Activated CD4-positive, alpha-beta T cell treated with anti-CD3 and anti-CD28 coated beads, Interleukin-2, amount 10 ng/mL, durations not matched to agents 24 days and 14 days (primary cell): ENCODE measurements at regions of chr7 and their contacts with region 1.

Region 1: GRCh38 chr7:50266635-50267386 is 37.7 kb upstream of the IKZF1 start:
- DNase-seq: peak; percentile 95
- H3K4me3 Mint-ChIP-seq: peak overlapping the region; percentile 86
- H3K27ac Mint-ChIP-seq: peak overlapping the region; percentile 95
- H3K4me1 Mint-ChIP-seq: peaks cover 84% of the 10 kb centered on the region
- H3K27me3 Mint-ChIP-seq: no peaks in the 10 kb centered on the region

Region 2: GRCh38 chr7:50227726-50228125 is 39.1 kb before region 1 on chr7:
- intact Hi-C with region 1: loop called (anchors 1 kb)
- DNase-seq: peak; percentile 63
- H3K4me3 Mint-ChIP-seq: peak overlapping the region; percentile 71
- H3K27ac Mint-ChIP-seq: peak overlapping the region; percentile 89
- H3K4me1 Mint-ChIP-seq: peaks cover 34% of the 10 kb centered on the region
- H3K27me3 Mint-ChIP-seq: no peaks in the 10 kb centered on the region

Region 3: DNA sequence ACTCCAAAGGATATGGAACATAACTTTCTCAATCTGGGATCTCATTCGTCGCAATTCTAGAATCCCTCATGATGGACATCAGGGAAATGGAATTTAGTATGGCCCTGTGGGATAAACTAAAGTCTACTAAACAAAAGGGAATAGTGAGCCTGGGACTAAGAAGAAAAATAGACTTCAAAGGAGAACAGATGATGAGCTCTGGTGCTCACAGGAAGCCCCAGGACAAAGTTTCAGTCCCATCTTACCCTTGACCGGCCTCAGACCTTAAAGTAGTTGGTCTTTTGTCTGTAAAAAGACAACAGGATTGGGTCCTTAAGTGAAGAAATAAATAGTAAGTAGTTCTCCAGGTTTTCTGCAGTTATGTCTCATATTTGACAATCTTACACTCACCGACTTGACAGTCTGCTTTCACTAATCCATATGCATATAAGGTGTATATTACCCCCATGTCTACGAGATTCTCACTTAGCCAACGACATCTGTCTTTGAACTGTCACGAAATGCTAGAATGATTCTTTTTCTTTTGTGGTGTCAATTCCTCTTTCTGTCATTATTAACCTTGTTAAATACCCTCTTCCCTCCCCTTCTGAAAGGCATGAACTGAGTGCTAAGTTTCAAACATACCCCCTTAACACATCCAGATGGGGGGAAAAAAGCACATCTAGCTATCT is 26.8 kb after region 1 on chr7:
- intact Hi-C with region 1: loop called (anchors 1 kb)
- DNase-seq: peak; percentile 45
- H3K4me3 Mint-ChIP-seq: no peak overlapping the region
- H3K27ac Mint-ChIP-seq: no peak overlapping the region
- H3K4me1 Mint-ChIP-seq: peaks cover 25% of the 10 kb centered on the region
- H3K27me3 Mint-ChIP-seq: peaks cover 4% of the 10 kb centered on the region

Region 4: GRCh38 chr7:50317221-50317678 is 50.4 kb after region 1 on chr7:
- intact Hi-C with region 1: loop called (anchors 2 kb)
- DNase-seq: peak; percentile 87
- H3K4me3 Mint-ChIP-seq: peak overlapping the region; percentile 79
- H3K27ac Mint-ChIP-seq: peak overlapping the region; percentile 88
- H3K4me1 Mint-ChIP-seq: peaks cover 87% of the 10 kb centered on the region
- H3K27me3 Mint-ChIP-seq: no peaks in the 10 kb centered on the region

Region 5: DNA sequence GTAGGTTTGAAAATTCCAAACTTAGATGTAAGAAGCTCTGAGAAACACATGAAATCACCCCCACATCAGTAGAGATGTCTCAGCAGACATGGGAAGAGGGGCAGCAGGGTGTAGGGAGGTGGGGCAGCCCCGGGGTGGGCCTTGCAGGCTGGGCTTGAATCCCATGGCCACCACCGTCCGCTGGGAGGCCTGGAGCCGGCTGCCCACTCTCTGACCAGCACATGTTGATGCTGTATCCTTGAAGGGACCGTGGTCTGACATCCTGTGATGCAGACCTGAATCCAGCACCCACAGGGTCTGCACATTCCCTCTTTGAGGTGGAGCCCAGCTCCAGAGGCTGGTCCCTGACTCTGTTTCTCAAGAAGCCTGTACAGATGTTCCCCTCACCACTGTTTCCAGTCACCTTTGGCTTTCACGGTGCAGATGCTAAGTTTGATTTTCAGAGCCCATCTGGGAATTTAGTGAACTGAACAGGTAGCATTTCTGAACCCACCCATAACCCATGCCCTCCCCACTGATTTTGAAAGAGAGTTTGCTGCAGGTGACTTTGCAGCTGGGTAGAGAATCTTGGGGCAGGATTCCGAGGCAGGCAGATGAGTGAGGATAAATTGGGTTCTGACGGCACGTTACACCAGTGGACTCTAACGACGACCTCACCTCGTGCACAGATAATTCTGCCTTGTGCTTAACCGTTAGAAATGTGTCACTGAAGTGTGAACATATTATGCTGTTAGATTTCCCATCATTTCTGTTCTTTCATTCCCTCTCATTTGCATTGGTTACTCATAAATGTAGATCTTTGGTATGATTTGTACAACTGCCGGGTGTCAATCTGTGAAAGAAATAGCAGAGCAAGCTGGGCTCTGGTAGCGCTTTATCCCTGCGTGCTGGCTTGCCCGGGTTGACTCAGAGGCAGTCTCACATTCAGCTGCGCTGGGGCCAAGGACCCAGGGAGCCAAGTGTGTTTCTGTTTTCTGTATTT is 83.4 kb after region 1 on chr7:
- intact Hi-C with region 1: loop called (anchors 1 kb)
- DNase-seq: peak; percentile 92
- H3K4me3 Mint-ChIP-seq: peak overlapping the region; percentile 76
- H3K27ac Mint-ChIP-seq: peak overlapping the region; percentile 95
- H3K4me1 Mint-ChIP-seq: peaks cover 95% of the 10 kb centered on the region
- H3K27me3 Mint-ChIP-seq: no peaks in the 10 kb centered on the region

Region 6: DNA sequence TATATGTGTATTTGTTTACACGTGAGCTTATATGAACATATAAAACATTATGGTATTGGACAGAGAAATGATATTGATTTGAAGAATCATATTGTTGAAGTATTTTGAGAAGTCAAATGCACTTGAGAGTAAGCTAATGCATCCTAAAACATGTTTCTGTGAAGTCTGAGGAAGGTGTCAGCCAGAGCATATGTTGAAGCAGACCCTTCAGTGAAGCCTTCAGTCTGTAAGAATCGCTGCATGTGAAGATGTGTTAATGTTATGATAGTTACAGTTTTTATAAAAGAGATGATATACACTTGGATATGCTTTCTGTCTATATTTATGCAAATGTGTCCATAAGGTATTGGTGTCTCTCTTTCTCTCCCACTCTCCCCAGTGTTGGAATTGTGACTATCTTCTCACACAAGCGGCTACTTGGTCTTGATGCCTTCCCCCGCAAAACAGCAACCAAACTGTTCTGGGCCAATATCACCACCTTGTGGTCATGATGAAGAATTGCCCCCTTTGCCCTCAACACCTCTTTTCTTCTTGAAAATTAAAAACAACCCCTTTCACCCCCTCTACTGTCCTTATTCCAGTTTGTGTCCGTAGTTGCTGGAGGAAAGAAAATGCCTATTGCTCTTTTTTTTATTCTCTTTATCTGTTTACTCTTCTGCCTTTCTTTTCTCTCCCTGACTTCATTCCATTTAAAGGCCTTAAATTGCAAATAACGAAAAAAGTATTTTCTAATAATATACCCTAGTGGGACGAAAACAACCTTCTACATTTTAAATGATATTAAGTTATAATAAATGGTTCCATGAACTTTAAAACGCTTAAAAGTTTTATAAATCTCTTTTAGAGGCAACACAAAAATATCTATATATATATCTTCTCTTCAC is 102.6 kb after region 1 on chr7:
- intact Hi-C with region 1: no loop called
- DNase-seq: peak; percentile 87
- H3K4me3 Mint-ChIP-seq: peak overlapping the region; percentile 55
- H3K27ac Mint-ChIP-seq: peak overlapping the region; percentile 45
- H3K4me1 Mint-ChIP-seq: peaks cover 85% of the 10 kb centered on the region
- H3K27me3 Mint-ChIP-seq: no peaks in the 10 kb centered on the region